ENCODE measurements at regions of chr11 and their contacts with region 1.

Region 1: DNA sequence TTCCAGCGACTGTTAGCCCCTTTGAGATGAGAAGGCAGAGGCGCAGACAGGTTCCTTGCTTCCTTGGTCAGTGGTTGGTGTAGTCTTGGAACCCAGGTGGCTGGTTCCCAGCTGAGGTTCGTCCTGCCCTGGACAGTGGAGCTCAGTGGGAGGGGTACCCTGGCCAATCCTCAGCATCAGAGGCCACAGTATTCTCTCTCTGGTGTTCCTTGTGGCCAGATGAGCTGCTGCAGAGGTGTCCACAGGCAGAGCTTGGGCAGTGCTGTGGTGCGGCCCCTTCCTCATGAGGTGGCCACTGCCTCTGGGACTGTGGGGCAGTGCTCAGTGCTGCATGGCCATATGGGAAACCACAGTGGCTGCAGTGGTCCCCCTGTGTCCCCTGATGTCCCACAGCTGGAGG is 61.8 kb downstream of the CTTN start:
- DNase-seq: no peak
- H3K4me3 ChIP-seq: no peak overlapping the region
- H3K27ac ChIP-seq: no peak overlapping the region
- H3K4me1 ChIP-seq: peaks cover 0 to 4% (median 2%) of the 10 kb centered on the region in 4 experiments; a peak in 4 of 7 replicates
- H3K27me3 ChIP-seq: peaks cover 0 to 2% (median 0%) of the 10 kb centered on the region in 4 experiments; a peak in 1 of 7 replicates
- CTCF ChIP-seq: peak in 2 of 3 experiments; percentile 2 to 19; a peak in 2 of 4 replicates
- EP300 ChIP-seq: no peak
- POLR2A ChIP-seq: no peak
- RAD21 ChIP-seq: no peak

Region 2: DNA sequence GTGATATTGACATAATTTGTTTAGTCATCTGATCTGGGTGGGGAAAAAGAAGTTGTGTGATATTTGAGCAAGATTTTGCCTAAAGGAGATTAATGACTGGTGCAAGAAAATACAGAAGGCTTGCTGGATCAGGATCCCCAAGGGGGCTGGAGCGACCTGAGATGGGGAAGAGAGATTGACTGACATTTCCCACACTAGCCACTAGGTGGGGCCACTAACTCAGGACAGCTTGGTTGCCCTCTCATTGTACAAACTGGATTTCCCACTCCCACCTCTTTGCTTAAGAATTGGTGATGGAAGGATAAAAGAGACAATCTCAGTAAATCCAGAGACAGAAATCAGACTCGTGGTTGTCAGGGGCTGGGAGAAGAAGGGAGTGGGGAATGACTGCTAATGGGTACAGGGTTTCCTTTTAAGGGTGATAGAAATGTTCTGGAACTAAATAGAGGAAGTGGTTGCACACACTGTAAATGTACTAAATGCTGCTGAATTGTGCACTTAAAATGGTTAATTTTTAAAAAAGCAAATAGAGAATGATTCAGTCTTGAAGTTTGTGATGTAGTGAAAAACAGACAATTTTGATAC is 11.0 kb before region 1 on chr11:
- CTCF ChIA-PET with region 1: interaction called, 20 read pairs
- POLR2A ChIA-PET with region 1: no interaction called
- DNase-seq: no peak
- H3K4me3 ChIP-seq: no peak overlapping the region
- H3K27ac ChIP-seq: no peak overlapping the region
- H3K4me1 ChIP-seq: no peaks in the 10 kb centered on the region
- H3K27me3 ChIP-seq: no peaks in the 10 kb centered on the region
- CTCF ChIP-seq: peak; percentile 76 to 84 (median 79)
- EP300 ChIP-seq: no peak
- POLR2A ChIP-seq: no peak
- RAD21 ChIP-seq: peak; percentile 81 to 85